Endothelial cell of umbilical vein (primary cell): ENCODE measurements at regions of chr4 and their contacts with region 1.

Region 1: GRCh38 chr4:1712216-1713002 is at the start of gene SLBP:
- DNase-seq: peak; percentile 86
- H3K4me3 ChIP-seq: peak within 1 kb of the TSS; percentile 60 to 73 (median 62)
- H3K27ac ChIP-seq: peak within 1 kb of the TSS; percentile 98
- H3K4me1 ChIP-seq: peaks cover 16% of the 10 kb centered on the region
- H3K27me3 ChIP-seq: no peaks in the 10 kb centered on the region
- CTCF ChIP-seq: no peak
- POLR2A ChIP-seq: peak; percentile 66
- total RNA-seq, gene SLBP: 62.7 and 63.1 TPM in 2 replicates

Region 2: GRCh38 chr4:1683736-1684505 is 28.5 kb before region 1 on chr4 and contains the start of gene FAM53A:
- CTCF ChIA-PET with region 1: no interaction called
- POLR2A ChIA-PET with region 1: no interaction called
- dilution Hi-C with region 1: no loop called
- intact Hi-C with region 1: loop called (anchors 2 kb)
- DNase-seq: peak; percentile 84
- H3K4me3 ChIP-seq: peak within 1 kb of the TSS; percentile 19 to 49 (median 47)
- H3K27ac ChIP-seq: no peak within 1 kb of the TSS
- H3K4me1 ChIP-seq: peaks cover 10% of the 10 kb centered on the region
- H3K27me3 ChIP-seq: no peaks in the 10 kb centered on the region
- CTCF ChIP-seq: no peak
- POLR2A ChIP-seq: peak; percentile 43
- total RNA-seq, gene FAM53A: 1.3 and 1.7 TPM in 2 replicates

Region 3: GRCh38 chr4:1726146-1726934 is 13.9 kb after region 1 on chr4:
- CTCF ChIA-PET with region 1: interaction called, 11 read pairs
- POLR2A ChIA-PET with region 1: interaction called, 8 read pairs
- dilution Hi-C with region 1: no loop called
- intact Hi-C with region 1: loop called (anchors 1 kb)
- DNase-seq: peak; percentile 93
- H3K4me3 ChIP-seq: no peak overlapping the region
- H3K27ac ChIP-seq: peak overlapping the region; percentile 70
- H3K4me1 ChIP-seq: peaks cover 47% of the 10 kb centered on the region
- H3K27me3 ChIP-seq: no peaks in the 10 kb centered on the region
- CTCF ChIP-seq: peak; percentile 97 to 98
- POLR2A ChIP-seq: no peak

Region 4: GRCh38 chr4:1767770-1768366 is 55.5 kb after region 1 on chr4:
- CTCF ChIA-PET with region 1: no interaction called
- POLR2A ChIA-PET with region 1: no interaction called
- dilution Hi-C with region 1: no loop called
- intact Hi-C with region 1: no loop called
- DNase-seq: peak; percentile 31
- H3K4me3 ChIP-seq: peak overlapping the region in 1 of 3 experiments; percentile 33
- H3K27ac ChIP-seq: no peak overlapping the region
- H3K4me1 ChIP-seq: peaks cover 5% of the 10 kb centered on the region
- H3K27me3 ChIP-seq: no peaks in the 10 kb centered on the region
- CTCF ChIP-seq: peak; percentile 17 to 59
- POLR2A ChIP-seq: no peak